ENCODE measurements at regions of chr1 and their contacts with region 1.

Region 1: DNA sequence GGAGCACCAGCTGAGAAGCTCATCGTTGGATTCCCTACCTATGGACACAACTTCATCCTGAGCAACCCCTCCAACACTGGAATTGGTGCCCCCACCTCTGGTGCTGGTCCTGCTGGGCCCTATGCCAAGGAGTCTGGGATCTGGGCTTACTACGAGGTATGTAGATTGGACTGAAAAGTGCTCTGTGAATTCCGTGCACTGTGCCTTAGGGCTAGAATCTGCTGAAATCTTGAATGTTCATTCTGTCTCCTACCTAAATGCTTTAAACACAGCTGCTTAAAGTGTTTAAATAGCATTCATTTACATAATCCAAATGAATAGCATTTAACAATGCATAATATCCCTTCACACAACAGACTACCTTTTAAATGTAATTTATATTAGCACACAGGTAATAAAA is 27.9 kb downstream of the CHIA start:
- DNase-seq: no peak
- ATAC-seq: no peak
- H3K4me3 ChIP-seq: no peak overlapping the region
- H3K4me3 Mint-ChIP-seq: no peak overlapping the region
- H3K27ac ChIP-seq: no peak overlapping the region
- H3K27ac Mint-ChIP-seq: no peak overlapping the region
- H3K4me1 ChIP-seq: peaks cover 12% of the 10 kb centered on the region
- H3K4me1 Mint-ChIP-seq: peaks cover 26% of the 10 kb centered on the region
- H3K27me3 ChIP-seq: no peaks in the 10 kb centered on the region
- H3K27me3 Mint-ChIP-seq: no peaks in the 10 kb centered on the region
- CTCF ChIP-seq: no peak

Region 2: GRCh38 chr1:111366256-111366655 is 47.7 kb after region 1 on chr1:
- CTCF ChIA-PET with region 1: no interaction called
- POLR2A ChIA-PET with region 1: no interaction called
- intact Hi-C with region 1: loop called in 1 of 2 experiments (anchors 5 kb)
- DNase-seq: no peak
- ATAC-seq: no peak
- H3K4me3 ChIP-seq: no peak overlapping the region
- H3K4me3 Mint-ChIP-seq: no peak overlapping the region
- H3K27ac ChIP-seq: no peak overlapping the region
- H3K27ac Mint-ChIP-seq: no peak overlapping the region
- H3K4me1 ChIP-seq: no peaks in the 10 kb centered on the region
- H3K4me1 Mint-ChIP-seq: no peaks in the 10 kb centered on the region
- H3K27me3 ChIP-seq: peaks cover 7 to 14% of the 10 kb centered on the region in 2 experiments
- H3K27me3 Mint-ChIP-seq: peaks cover 24% of the 10 kb centered on the region
- CTCF ChIP-seq: no peak

Region 3: GRCh38 chr1:111436726-111437125 is 118.2 kb after region 1 on chr1:
- CTCF ChIA-PET with region 1: no interaction called
- POLR2A ChIA-PET with region 1: no interaction called
- intact Hi-C with region 1: no loop called
- DNase-seq: no peak
- ATAC-seq: no peak
- H3K4me3 ChIP-seq: no peak overlapping the region
- H3K4me3 Mint-ChIP-seq: no peak overlapping the region
- H3K27ac ChIP-seq: no peak overlapping the region
- H3K27ac Mint-ChIP-seq: peak overlapping the region; percentile 9
- H3K4me1 ChIP-seq: peaks cover 9% of the 10 kb centered on the region
- H3K4me1 Mint-ChIP-seq: peaks cover 11% of the 10 kb centered on the region
- H3K27me3 ChIP-seq: no peaks in the 10 kb centered on the region
- H3K27me3 Mint-ChIP-seq: no peaks in the 10 kb centered on the region
- CTCF ChIP-seq: no peak

Measured in CD4-positive, alpha-beta T cell (primary cell).